ENCODE measurements at regions of chr2 and their contacts with region 1.

Region 1: DNA sequence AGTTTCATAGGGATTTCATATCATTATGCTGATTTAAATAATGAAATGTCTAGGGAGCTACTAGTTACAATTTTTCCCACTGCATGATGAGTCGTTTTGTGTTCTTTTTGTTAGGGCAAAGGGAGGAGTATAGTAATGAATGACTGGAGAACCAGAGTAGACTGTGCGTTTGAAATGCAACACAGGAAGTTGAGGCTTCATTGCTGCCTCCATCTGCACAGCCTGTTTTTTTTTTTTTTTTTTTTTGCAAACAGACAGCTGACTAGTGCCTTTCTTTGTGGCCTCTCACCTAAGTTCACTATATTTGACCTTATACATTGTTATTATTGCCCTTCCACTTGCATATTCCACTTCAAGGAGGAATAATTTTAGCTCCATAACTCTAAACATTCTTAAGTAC is 286.7 kb upstream of the LRRTM1 start:
- DNase-seq: no peak
- H3K4me3 ChIP-seq: no peak overlapping the region
- H3K27ac ChIP-seq: no peak overlapping the region
- H3K4me1 ChIP-seq: no peaks in the 10 kb centered on the region
- H3K27me3 ChIP-seq: no peaks in the 10 kb centered on the region
- CTCF ChIP-seq: no peak

Region 2: DNA sequence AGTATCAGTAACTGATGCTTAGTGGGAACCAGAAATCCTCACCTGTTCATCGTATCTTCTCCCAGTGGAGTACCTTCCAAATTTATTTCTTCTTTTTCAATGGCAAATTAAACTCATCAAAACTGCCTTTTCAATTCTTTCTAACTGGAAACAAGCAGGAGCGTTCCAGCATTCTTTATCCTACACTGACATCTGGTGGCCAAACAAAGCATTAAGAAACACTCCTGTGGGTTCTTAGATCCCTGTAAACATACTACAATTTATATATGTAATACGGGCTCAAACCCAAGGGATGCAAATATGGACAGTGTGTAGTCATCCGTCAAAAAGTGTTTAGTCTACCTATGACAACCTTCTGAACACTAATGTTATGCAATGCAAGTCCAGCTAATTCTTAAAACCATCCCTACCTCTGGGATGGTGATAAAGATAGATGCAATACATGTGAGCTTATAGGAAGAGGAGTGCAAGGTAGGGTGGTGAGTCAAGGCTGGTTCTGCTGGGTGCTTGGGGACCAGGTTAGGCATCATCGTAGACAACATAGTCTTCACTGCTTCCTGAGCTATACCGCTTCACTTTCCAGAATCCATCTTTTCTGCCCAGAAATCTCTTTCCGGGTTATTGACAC is 703.4 kb before region 1 on chr2:
- intact Hi-C with region 1: loop called (anchors 10 kb)
- DNase-seq: no peak
- H3K4me3 ChIP-seq: no peak overlapping the region
- H3K27ac ChIP-seq: no peak overlapping the region
- H3K4me1 ChIP-seq: no peaks in the 10 kb centered on the region
- H3K27me3 ChIP-seq: peaks cover 0 to 5% of the 10 kb centered on the region in 2 donors
- CTCF ChIP-seq: peak; percentile 46 to 55

Region 3: GRCh38 chr2:80548469-80548868 is 42.8 kb before region 1 on chr2:
- intact Hi-C with region 1: no loop called
- DNase-seq: no peak
- H3K4me3 ChIP-seq: no peak overlapping the region
- H3K27ac ChIP-seq: no peak overlapping the region
- H3K4me1 ChIP-seq: no peaks in the 10 kb centered on the region
- H3K27me3 ChIP-seq: no peaks in the 10 kb centered on the region
- CTCF ChIP-seq: no peak

Region 4: DNA sequence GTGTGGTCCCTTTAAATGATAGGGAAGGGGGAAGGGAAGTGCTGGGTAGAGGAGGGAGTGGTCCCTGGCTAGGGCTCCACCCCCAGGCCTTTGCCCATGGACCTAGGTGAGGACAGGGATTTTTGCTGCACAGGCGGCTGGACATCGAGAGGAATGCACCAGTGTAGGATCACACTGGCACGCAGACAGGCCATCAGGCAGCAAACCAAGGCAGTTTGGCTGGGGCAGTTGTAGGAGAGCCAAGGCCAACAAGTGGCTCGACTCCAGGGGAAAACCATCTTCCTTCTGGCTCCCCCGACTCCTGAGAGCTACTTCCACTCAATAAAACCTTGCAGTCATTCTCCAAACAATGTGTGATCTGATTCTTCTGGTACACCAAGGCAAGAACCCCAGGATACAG is 115.3 kb after region 1 on chr2:
- intact Hi-C with region 1: no loop called
- DNase-seq: no peak
- H3K4me3 ChIP-seq: no peak overlapping the region
- H3K27ac ChIP-seq: no peak overlapping the region
- H3K4me1 ChIP-seq: no peaks in the 10 kb centered on the region
- H3K27me3 ChIP-seq: no peaks in the 10 kb centered on the region
- CTCF ChIP-seq: no peak